PC-3 (cell line): ENCODE measurements at regions of chr1 and their contacts with region 1.

Region 1: DNA sequence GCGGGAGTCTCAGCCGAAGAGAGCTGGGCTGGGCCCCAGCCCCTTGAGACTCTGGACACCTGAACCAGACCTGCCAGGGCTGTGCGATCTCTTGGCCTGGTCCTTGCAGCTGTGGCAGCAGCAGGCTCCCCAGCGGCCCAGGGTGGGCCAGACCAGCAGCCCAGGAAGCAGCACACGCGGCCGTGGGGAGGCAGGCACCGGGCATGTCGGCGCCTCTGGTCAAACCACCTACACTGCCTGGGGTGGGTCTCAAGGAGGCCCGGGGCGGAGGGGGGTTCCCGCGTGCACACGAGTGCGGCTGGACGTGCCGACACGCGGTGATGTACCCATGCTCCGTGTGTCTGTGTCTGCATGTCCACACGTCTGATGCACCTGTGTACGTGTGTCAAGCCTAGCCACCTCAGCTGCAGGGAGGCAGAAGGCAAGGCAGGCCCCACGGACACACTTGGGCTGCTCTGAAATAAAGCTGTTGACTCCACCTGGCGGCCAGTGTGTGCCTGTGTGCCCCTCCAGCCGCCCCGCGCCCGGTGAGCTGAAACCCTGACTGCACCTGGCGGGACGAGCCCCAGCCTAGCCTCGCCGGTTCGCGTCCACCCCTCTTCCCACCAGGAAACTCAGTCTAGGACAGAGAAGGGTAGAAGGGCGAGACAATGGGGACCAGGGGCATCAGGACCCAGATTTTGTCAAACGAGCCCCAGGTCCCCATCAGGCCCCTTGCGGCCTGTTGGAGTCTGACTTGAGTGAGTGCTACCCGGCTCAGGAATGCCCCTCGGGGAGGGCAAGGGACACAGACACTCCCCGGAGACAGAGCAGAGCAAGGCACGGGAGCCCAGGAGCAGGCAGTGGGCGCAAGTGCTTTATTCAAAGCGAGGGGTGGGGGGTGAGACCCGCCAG is 11.6 kb downstream of the SCNN1D start:
- DNase-seq: peak; percentile 89
- ATAC-seq: peak; percentile 85
- H3K4me3 ChIP-seq: no peak overlapping the region
- H3K27ac ChIP-seq: no peak overlapping the region; the same call in 1 of the 2 replicates
- H3K4me1 ChIP-seq: peaks cover 12% of the 10 kb centered on the region
- H3K27me3 ChIP-seq: no peaks in the 10 kb centered on the region
- CTCF ChIP-seq: peak; percentile 95

Region 2: GRCh38 chr1:1122078-1122811 is 169.6 kb before region 1 on chr1:
- CTCF ChIA-PET with region 1: interaction called, 26 read pairs
- POLR2A ChIA-PET with region 1: no interaction called
- intact Hi-C with region 1: loop called (anchors 2 kb)
- DNase-seq: peak; percentile 92
- ATAC-seq: peak; percentile 89
- H3K4me3 ChIP-seq: peak overlapping the region; percentile 72
- H3K27ac ChIP-seq: no peak overlapping the region
- H3K4me1 ChIP-seq: peaks cover 25% of the 10 kb centered on the region
- H3K27me3 ChIP-seq: no peaks in the 10 kb centered on the region
- CTCF ChIP-seq: peak; percentile 98

Region 3: GRCh38 chr1:1150100-1150499 is 141.7 kb before region 1 on chr1:
- CTCF ChIA-PET with region 1: no interaction called
- POLR2A ChIA-PET with region 1: no interaction called
- intact Hi-C with region 1: no loop called
- DNase-seq: peak; percentile 51
- ATAC-seq: peak; percentile 77
- H3K4me3 ChIP-seq: no peak overlapping the region
- H3K27ac ChIP-seq: no peak overlapping the region
- H3K4me1 ChIP-seq: peaks cover 9% of the 10 kb centered on the region
- H3K27me3 ChIP-seq: no peaks in the 10 kb centered on the region
- CTCF ChIP-seq: no peak

Region 4: GRCh38 chr1:1200851-1201810 is 90.7 kb before region 1 on chr1:
- CTCF ChIA-PET with region 1: no interaction called
- POLR2A ChIA-PET with region 1: no interaction called
- intact Hi-C with region 1: no loop called
- DNase-seq: peak; percentile 48
- ATAC-seq: peak; percentile 57
- H3K4me3 ChIP-seq: peak overlapping the region; percentile 71
- H3K27ac ChIP-seq: no peak overlapping the region
- H3K4me1 ChIP-seq: peaks cover 11% of the 10 kb centered on the region; the same call in 1 of the 2 replicates
- H3K27me3 ChIP-seq: no peaks in the 10 kb centered on the region
- CTCF ChIP-seq: no peak

Region 5: GRCh38 chr1:1237874-1238701 is 53.7 kb before region 1 on chr1:
- CTCF ChIA-PET with region 1: no interaction called
- POLR2A ChIA-PET with region 1: no interaction called
- intact Hi-C with region 1: loop called (anchors 5 kb)
- DNase-seq: peak; percentile 82
- ATAC-seq: peak; percentile 29
- H3K4me3 ChIP-seq: peak overlapping the region; percentile 39
- H3K27ac ChIP-seq: peak overlapping the region; percentile 91
- H3K4me1 ChIP-seq: peaks cover 57% of the 10 kb centered on the region
- H3K27me3 ChIP-seq: no peaks in the 10 kb centered on the region
- CTCF ChIP-seq: no peak

Region 6: GRCh38 chr1:1264868-1265272 is 26.9 kb before region 1 on chr1:
- CTCF ChIA-PET with region 1: interaction called, 4 read pairs
- POLR2A ChIA-PET with region 1: no interaction called
- intact Hi-C with region 1: loop called (anchors 2 kb)
- DNase-seq: peak; percentile 100
- ATAC-seq: peak; percentile 96
- H3K4me3 ChIP-seq: no peak overlapping the region
- H3K27ac ChIP-seq: peak overlapping the region; percentile 92
- H3K4me1 ChIP-seq: peaks cover 23% of the 10 kb centered on the region
- H3K27me3 ChIP-seq: no peaks in the 10 kb centered on the region
- CTCF ChIP-seq: peak; percentile 94

Region 7: GRCh38 chr1:1273512-1274298 is 18.1 kb before region 1 on chr1 and contains the start of gene UBE2J2:
- CTCF ChIA-PET with region 1: interaction called, 13 read pairs
- POLR2A ChIA-PET with region 1: no interaction called
- intact Hi-C with region 1: no loop called
- DNase-seq: peak; percentile 91
- ATAC-seq: peak; percentile 80
- H3K4me3 ChIP-seq: peak within 1 kb of the TSS; percentile 96
- H3K27ac ChIP-seq: peak within 1 kb of the TSS; percentile 90
- H3K4me1 ChIP-seq: peaks cover 29% of the 10 kb centered on the region
- H3K27me3 ChIP-seq: no peaks in the 10 kb centered on the region
- CTCF ChIP-seq: no peak
- total RNA-seq, gene UBE2J2: 182 and 200 TPM in 2 replicates

Region 8: DNA sequence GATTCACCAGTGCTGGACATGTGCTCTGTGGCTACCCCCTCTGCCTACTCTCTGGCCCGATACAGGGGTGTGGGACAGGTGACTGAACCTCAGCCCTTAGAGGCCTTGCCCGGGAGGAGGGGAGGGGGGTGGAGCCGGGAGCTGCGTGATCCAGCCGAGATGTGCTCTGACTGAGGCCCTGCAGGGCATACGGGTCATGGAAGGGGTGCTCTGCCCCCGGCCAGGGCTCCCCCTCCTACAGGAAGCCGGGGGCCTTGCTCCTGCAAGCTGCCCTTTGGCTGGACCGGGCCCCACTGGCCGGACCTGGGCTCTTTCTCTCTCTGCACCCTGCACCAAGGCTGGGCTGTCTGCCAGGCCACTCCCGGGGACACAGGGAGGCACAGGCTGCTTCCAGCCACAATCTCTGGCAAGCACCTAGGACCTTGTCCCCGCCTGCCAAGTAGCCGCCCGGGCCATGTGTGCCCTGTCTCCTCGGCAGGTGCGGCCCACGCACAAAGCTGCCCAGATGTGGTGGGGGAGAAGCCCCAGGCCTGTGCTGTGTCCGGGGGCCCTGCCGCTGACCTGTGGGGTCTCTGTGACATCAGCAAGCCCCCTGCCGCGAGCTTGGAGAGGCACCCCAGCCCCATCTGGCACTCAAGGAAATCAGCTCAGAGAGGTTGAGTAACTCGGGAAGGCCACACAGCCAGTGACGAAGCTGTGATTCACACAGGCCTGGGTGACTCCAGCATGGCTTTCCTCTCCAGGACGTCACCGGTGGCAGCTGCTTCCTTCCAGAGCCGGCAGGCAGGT is 10.1 kb before region 1 on chr1:
- CTCF ChIA-PET with region 1: interaction called, 23 read pairs
- POLR2A ChIA-PET with region 1: no interaction called
- intact Hi-C with region 1: no loop called
- DNase-seq: peak; percentile 97
- ATAC-seq: peak; percentile 81
- H3K4me3 ChIP-seq: peak overlapping the region; percentile 4; the same call in 1 of the 2 replicates
- H3K27ac ChIP-seq: peak overlapping the region; percentile 82
- H3K4me1 ChIP-seq: peaks cover 24% of the 10 kb centered on the region
- H3K27me3 ChIP-seq: no peaks in the 10 kb centered on the region
- CTCF ChIP-seq: no peak

Region 9: DNA sequence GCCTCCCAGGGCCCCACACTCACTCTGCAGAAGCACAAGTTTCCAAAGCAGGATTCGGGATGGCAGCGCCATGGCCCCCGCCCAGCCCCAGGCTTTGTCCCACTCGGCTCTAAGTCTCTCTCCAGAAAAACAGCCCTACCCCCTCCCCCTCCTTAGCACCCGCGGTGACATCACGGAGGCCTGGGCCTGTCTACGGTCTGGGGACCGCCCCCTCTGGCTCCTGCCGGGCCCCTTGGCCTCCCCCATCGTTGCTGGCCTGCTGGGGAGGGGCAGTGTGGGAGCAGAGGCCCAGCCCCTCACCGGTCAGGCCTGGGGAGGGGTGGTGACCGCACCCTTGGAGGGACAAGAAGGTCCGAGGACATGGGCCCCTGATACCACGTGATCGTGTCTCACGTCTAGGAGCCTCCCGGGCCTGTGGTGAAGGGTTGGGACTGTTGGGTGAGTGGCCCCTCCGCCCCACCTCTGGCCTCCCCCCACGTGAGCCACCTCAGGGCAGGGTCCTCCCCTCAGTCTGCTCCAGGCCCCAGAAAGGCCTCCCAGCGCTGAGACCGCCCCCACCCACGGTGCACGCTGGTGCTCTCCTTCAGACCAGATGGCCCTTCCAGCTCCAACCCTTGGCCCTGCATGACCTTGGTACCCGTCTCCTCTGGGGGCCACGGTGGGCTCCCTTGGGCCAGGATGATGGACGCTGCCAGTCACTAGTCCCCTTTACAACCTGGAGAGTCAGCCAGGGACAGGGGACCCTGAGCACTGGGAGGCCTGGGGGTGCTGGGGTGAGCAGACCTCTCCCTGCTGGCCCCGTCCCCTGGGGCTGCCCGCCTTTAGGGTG is 66.9 kb after region 1 on chr1 and contains the start of gene MXRA8:
- CTCF ChIA-PET with region 1: no interaction called
- POLR2A ChIA-PET with region 1: no interaction called
- intact Hi-C with region 1: no loop called
- DNase-seq: no peak
- ATAC-seq: no peak
- H3K4me3 ChIP-seq: no peak within 1 kb of the TSS
- H3K27ac ChIP-seq: no peak within 1 kb of the TSS
- H3K4me1 ChIP-seq: peaks cover 35% of the 10 kb centered on the region
- H3K27me3 ChIP-seq: no peaks in the 10 kb centered on the region
- CTCF ChIP-seq: no peak
- total RNA-seq, gene MXRA8: 25.3 and 29.0 TPM in 2 replicates